Right ventricle myocardium superior (tissue), 1 donor: ENCODE measurements at regions of chr2 and their contacts with region 1.

Region 1: DNA sequence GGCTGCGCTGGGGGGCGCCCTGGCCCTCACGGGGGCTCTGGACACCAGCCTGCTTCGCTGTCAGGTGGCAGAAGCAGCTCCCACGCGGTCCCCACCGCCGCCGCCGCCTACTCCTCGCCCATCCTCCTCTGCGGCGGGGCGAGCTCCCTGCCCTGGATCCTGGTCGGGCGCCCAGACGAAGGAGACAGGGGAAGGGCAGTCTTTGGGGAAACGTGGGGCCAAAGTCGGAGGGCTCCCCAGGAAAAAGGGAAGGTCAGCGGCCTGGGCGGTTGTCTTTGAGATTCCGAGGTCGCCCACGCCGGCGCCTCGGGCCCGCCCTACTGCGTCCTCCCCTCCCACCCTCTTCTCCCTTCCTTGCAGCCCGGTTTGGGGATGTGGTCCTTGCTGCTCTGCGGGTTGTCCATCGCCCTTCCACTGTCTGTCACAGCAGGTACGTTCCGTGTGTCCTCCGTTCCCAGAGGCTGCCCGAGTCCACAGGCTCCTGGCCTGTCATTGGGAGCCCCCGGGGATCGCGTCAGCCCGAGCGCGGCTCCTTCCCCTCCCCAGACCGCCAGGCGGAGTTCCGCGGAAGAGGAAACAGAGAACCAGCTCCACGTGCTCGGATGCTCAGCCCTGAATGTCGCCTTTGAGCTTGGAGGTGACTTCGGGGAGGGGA is 800 bp downstream of the IL1RL2 start:
- DNase-seq: peak; percentile 75
- ATAC-seq: peak; percentile 90

Region 2: DNA sequence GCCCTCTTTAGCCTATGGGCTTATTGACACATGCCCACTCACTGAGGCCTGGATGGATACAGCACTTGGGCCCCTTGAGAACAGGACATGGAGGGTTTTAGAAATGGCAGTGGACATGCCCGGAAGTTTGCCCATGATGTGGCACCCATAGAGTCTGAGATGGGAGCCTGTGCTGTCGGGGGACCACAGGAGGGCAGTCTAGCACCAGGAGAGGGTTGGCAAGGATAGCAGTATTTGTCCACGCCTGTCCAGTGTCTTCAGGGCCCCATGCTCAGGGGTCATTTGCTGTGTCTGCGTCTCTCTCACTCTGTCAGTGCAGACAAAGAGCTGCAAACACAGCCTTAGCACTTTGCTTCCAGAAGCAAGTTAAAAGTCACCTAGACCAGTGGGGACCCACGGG is 47.9 kb after region 1 on chr2:
- intact Hi-C with region 1: loop called (anchors 10 kb)
- DNase-seq: no peak
- ATAC-seq: no peak

Region 3: DNA sequence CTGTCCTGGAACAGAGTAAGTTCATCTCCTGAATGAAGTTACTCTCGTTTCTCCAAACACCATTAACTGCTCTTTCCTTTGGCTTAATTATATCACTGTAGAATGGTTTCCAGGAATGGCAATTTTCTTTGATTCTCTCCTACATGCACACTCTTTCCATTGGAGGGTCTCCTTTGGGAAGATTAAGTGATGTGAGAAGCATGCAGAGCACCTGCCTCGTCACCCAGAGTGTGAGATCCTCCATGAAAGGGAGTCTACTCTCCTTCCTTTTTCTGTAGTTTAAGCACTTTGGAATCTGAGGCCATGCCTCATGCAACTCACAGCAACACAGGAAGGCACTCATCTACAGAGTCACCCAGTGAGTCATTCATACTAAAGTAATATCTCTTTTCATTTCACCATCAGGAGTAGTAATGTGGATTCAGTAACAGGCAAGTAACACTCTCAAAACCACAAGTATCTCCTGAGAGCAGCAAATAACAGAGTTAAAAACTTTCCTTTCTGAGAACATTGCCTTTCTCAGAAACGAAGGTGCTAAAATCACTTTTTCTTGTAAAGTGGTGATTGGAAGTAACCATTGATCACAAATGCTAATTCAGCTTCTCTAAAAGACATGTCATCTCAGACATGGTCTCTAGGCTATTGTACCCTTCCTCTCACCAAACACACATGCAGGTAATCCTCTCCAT is 70.9 kb after region 1 on chr2:
- intact Hi-C with region 1: no loop called
- DNase-seq: no peak
- ATAC-seq: no peak

Region 4: GRCh38 chr2:102278720-102279390 is 91.2 kb after region 1 on chr2:
- intact Hi-C with region 1: no loop called
- DNase-seq: no peak
- ATAC-seq: no peak